ENCODE measurements at regions of chr6 and their contacts with region 1.

Region 1: GRCh38 chr6:106223300-106223930 is 102.1 kb downstream of the ATG5 start:
- DNase-seq: peak; percentile 70 to 79 (median 73)
- H3K4me3 ChIP-seq: no peak overlapping the region
- H3K4me3 Mint-ChIP-seq: no peak overlapping the region
- H3K27ac ChIP-seq: no peak overlapping the region
- H3K27ac Mint-ChIP-seq: peak overlapping the region in 3 of 7 donors; percentile 40 to 74 (median 63)
- H3K4me1 ChIP-seq: peaks cover 8% of the 10 kb centered on the region
- H3K4me1 Mint-ChIP-seq: peaks cover 6 to 28% (median 13%) of the 10 kb centered on the region in 4 donors
- H3K27me3 ChIP-seq: no peaks in the 10 kb centered on the region
- H3K27me3 Mint-ChIP-seq: no peaks in the 10 kb centered on the region

Region 2: DNA sequence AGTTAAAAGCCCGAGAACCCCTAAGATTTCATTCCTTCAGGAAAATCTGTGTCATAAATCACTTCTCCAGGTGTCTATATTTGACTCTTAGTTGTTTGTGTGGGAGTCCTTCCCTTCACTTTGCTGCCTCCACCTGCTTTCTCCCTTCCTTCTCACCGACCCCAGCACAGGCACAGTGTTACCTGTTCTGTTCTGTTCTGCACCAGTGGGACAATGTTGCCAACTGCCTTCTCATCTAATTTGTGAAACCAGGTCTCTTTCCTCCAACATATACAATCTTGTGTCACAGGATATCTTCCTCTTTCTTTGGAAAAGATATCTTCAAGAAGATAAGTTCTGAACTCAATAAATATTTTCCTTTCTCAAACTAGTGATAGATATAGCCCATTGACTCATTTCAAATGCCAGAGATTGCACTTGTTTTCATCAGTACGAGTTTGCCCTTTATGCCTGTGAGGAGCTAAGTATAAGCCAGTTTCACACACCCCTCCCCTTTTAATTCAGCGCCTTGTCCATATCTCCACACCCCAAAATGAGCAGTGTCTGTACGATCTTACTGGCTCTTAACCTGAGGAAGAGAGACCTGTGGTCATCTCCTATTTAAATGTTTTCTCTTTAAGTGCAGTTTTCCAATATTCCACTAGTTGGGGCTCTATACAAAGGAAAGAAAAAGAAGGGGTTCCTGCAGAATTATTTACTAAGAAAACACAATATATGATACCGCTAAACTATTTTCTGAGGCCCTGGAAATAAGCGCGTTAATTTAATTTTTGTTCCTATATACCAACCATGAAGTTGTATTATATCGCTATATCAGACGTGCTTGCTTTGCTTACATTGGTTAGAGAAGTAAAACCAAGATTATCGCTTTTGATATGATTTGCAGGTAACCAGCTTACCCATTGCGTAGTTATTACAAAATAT is 738.9 kb before region 1 on chr6:
- CTCF ChIA-PET with region 1: interaction called, 23 read pairs
- POLR2A ChIA-PET with region 1: no interaction called
- intact Hi-C with region 1: loop called (anchors 1 kb)
- DNase-seq: peak in 4 of 5 donors; percentile 34 to 55 (median 44)
- H3K4me3 ChIP-seq: no peak overlapping the region
- H3K4me3 Mint-ChIP-seq: peak overlapping the region; percentile 20 to 71 (median 62)
- H3K27ac ChIP-seq: no peak overlapping the region
- H3K27ac Mint-ChIP-seq: peak overlapping the region in 6 of 7 donors; percentile 7 to 76 (median 60)
- H3K4me1 ChIP-seq: peaks cover 32% of the 10 kb centered on the region
- H3K4me1 Mint-ChIP-seq: peaks cover 13 to 34% (median 18%) of the 10 kb centered on the region in 4 donors
- H3K27me3 ChIP-seq: no peaks in the 10 kb centered on the region
- H3K27me3 Mint-ChIP-seq: no peaks in the 10 kb centered on the region

Region 3: DNA sequence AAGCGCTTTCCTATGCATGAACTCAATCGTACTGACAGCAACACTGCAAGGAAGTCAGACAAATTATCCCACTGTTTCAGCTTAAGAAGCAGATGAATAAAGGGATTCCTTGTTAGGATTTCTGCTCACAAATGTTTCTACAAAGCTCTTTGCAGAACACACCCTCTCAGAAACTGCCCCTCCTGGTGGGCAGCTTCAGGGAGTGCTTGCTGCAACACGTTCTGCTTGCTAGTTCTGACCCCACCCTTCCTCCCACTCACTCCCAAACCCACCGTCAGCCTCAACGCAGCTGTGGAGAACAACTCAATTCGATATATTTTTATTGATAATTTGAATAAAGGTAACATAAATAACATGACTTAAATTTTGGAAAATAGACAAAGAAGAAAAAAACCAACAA is 388.0 kb before region 1 on chr6:
- CTCF ChIA-PET with region 1: interaction called, 13 read pairs
- POLR2A ChIA-PET with region 1: no interaction called
- intact Hi-C with region 1: no loop called
- DNase-seq: peak in 2 of 5 donors; percentile 2 to 6
- H3K4me3 ChIP-seq: no peak overlapping the region
- H3K4me3 Mint-ChIP-seq: no peak overlapping the region
- H3K27ac ChIP-seq: no peak overlapping the region
- H3K27ac Mint-ChIP-seq: no peak overlapping the region
- H3K4me1 ChIP-seq: no peaks in the 10 kb centered on the region
- H3K4me1 Mint-ChIP-seq: peaks cover 0 to 2% (median 0%) of the 10 kb centered on the region in 4 donors
- H3K27me3 ChIP-seq: no peaks in the 10 kb centered on the region
- H3K27me3 Mint-ChIP-seq: no peaks in the 10 kb centered on the region

Region 4: GRCh38 chr6:106097411-106098231 is 125.8 kb before region 1 on chr6:
- CTCF ChIA-PET with region 1: interaction called, 107 read pairs
- POLR2A ChIA-PET with region 1: interaction called, 31 read pairs
- intact Hi-C with region 1: no loop called
- DNase-seq: peak; percentile 83 to 92 (median 89)
- H3K4me3 ChIP-seq: peak overlapping the region; percentile 89 to 94
- H3K4me3 Mint-ChIP-seq: peak overlapping the region; percentile 95 to 99 (median 97)
- H3K27ac ChIP-seq: peak overlapping the region; percentile 69
- H3K27ac Mint-ChIP-seq: peak overlapping the region; percentile 94 to 98 (median 98)
- H3K4me1 ChIP-seq: peaks cover 71% of the 10 kb centered on the region
- H3K4me1 Mint-ChIP-seq: peaks cover 46 to 86% (median 60%) of the 10 kb centered on the region in 4 donors
- H3K27me3 ChIP-seq: no peaks in the 10 kb centered on the region
- H3K27me3 Mint-ChIP-seq: no peaks in the 10 kb centered on the region

Region 5: GRCh38 chr6:106141441-106142237 is 81.8 kb before region 1 on chr6:
- CTCF ChIA-PET with region 1: interaction called, 18 read pairs
- POLR2A ChIA-PET with region 1: no interaction called
- intact Hi-C with region 1: no loop called
- DNase-seq: peak; percentile 17 to 46 (median 31)
- H3K4me3 ChIP-seq: peak overlapping the region in 1 of 2 donors; percentile 5
- H3K4me3 Mint-ChIP-seq: peak overlapping the region in 7 of 8 donors; percentile 37 to 75 (median 71)
- H3K27ac ChIP-seq: no peak overlapping the region
- H3K27ac Mint-ChIP-seq: peak overlapping the region; percentile 74 to 90 (median 87)
- H3K4me1 ChIP-seq: peaks cover 44% of the 10 kb centered on the region
- H3K4me1 Mint-ChIP-seq: peaks cover 24 to 54% (median 34%) of the 10 kb centered on the region in 4 donors
- H3K27me3 ChIP-seq: no peaks in the 10 kb centered on the region
- H3K27me3 Mint-ChIP-seq: no peaks in the 10 kb centered on the region

Region 6: DNA sequence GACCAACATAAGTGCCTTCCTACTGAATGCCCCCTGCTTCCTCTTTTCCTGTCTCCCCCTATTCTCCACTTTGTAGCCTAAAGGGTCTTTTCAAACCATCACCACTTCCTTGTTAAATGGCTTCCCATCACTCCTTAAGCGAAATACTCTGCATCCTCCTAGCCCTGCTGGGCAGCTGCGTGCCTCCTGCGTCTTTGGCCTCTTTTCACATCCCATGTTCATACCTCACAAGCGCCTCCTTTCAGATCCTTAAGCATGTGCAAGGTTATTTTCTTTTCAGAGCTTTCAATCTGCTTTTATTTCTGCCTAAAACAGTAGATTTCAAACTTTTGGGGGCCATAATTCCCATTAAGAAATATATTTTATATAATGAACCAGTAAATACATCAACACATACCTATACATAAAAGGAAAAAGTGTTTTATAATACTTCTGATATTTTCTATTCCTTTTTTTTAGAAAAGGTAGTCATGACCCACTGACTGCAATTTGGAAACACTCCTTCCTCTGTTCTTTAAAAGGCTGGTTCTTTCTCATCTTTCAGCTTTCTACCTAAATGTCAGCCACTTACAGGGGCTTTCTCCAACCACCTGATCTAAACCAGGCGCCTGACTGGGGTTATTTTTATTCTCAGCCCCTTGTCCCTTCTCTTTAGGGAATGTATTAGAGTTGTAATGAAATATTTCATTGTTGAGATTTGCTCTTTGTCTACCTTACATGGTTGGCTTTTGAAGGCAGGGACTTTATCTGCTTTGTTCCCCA is 53.2 kb before region 1 on chr6:
- CTCF ChIA-PET with region 1: no interaction called
- POLR2A ChIA-PET with region 1: no interaction called
- intact Hi-C with region 1: no loop called
- DNase-seq: no peak
- H3K4me3 ChIP-seq: no peak overlapping the region
- H3K4me3 Mint-ChIP-seq: no peak overlapping the region
- H3K27ac ChIP-seq: no peak overlapping the region
- H3K27ac Mint-ChIP-seq: no peak overlapping the region
- H3K4me1 ChIP-seq: peaks cover 22% of the 10 kb centered on the region
- H3K4me1 Mint-ChIP-seq: peaks cover 16 to 32% (median 23%) of the 10 kb centered on the region in 4 donors
- H3K27me3 ChIP-seq: no peaks in the 10 kb centered on the region
- H3K27me3 Mint-ChIP-seq: no peaks in the 10 kb centered on the region

Region 7: GRCh38 chr6:106194949-106195921 is 28.2 kb before region 1 on chr6:
- CTCF ChIA-PET with region 1: interaction called, 10 read pairs
- POLR2A ChIA-PET with region 1: interaction called, 3 read pairs
- intact Hi-C with region 1: no loop called
- DNase-seq: peak; percentile 56 to 68 (median 59)
- H3K4me3 ChIP-seq: peak overlapping the region in 1 of 2 donors; percentile 14
- H3K4me3 Mint-ChIP-seq: peak overlapping the region; percentile 53 to 81 (median 73)
- H3K27ac ChIP-seq: peak overlapping the region; percentile 17
- H3K27ac Mint-ChIP-seq: peak overlapping the region; percentile 86 to 95 (median 88)
- H3K4me1 ChIP-seq: peaks cover 47% of the 10 kb centered on the region
- H3K4me1 Mint-ChIP-seq: peaks cover 29 to 51% (median 37%) of the 10 kb centered on the region in 4 donors
- H3K27me3 ChIP-seq: no peaks in the 10 kb centered on the region
- H3K27me3 Mint-ChIP-seq: no peaks in the 10 kb centered on the region

Region 8: GRCh38 chr6:106244931-106245330 is 21.5 kb after region 1 on chr6:
- CTCF ChIA-PET with region 1: no interaction called
- POLR2A ChIA-PET with region 1: no interaction called
- intact Hi-C with region 1: no loop called
- DNase-seq: no peak
- H3K4me3 ChIP-seq: no peak overlapping the region
- H3K4me3 Mint-ChIP-seq: no peak overlapping the region
- H3K27ac ChIP-seq: no peak overlapping the region
- H3K27ac Mint-ChIP-seq: no peak overlapping the region
- H3K4me1 ChIP-seq: no peaks in the 10 kb centered on the region
- H3K4me1 Mint-ChIP-seq: peaks cover 2 to 14% (median 8%) of the 10 kb centered on the region in 4 donors
- H3K27me3 ChIP-seq: no peaks in the 10 kb centered on the region
- H3K27me3 Mint-ChIP-seq: no peaks in the 10 kb centered on the region

Region 9: DNA sequence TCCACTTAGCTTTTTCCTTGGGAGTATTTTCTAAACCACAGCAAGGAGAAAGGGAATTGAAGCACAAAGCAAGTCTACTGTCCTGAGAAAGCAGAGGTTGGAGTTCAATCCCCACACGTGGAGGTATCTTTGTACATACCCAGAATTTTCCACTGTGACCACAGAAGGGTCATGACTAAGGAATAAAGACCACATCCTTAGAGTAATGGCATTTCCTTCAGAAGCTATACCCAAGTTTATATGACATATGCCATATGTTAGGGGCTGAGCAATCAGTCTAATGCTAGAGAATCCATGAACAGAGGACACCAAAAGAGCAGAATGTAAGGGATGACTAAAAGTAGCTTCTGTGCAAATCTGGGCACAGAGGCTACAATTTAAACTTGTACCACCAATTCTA is 55.8 kb after region 1 on chr6:
- CTCF ChIA-PET with region 1: interaction called, 12 read pairs
- POLR2A ChIA-PET with region 1: no interaction called
- intact Hi-C with region 1: no loop called
- DNase-seq: no peak
- H3K4me3 ChIP-seq: no peak overlapping the region
- H3K4me3 Mint-ChIP-seq: no peak overlapping the region
- H3K27ac ChIP-seq: no peak overlapping the region
- H3K27ac Mint-ChIP-seq: peak overlapping the region in 3 of 7 donors; percentile 5 to 55 (median 6)
- H3K4me1 ChIP-seq: no peaks in the 10 kb centered on the region
- H3K4me1 Mint-ChIP-seq: peaks cover 24 to 41% (median 35%) of the 10 kb centered on the region in 4 donors
- H3K27me3 ChIP-seq: no peaks in the 10 kb centered on the region
- H3K27me3 Mint-ChIP-seq: no peaks in the 10 kb centered on the region

Measured in CD4-positive, alpha-beta memory T cell (primary cell).